Tibial artery (tissue), 4 donors: ENCODE measurements at regions of chr11 and their contacts with region 1.

Region 1: DNA sequence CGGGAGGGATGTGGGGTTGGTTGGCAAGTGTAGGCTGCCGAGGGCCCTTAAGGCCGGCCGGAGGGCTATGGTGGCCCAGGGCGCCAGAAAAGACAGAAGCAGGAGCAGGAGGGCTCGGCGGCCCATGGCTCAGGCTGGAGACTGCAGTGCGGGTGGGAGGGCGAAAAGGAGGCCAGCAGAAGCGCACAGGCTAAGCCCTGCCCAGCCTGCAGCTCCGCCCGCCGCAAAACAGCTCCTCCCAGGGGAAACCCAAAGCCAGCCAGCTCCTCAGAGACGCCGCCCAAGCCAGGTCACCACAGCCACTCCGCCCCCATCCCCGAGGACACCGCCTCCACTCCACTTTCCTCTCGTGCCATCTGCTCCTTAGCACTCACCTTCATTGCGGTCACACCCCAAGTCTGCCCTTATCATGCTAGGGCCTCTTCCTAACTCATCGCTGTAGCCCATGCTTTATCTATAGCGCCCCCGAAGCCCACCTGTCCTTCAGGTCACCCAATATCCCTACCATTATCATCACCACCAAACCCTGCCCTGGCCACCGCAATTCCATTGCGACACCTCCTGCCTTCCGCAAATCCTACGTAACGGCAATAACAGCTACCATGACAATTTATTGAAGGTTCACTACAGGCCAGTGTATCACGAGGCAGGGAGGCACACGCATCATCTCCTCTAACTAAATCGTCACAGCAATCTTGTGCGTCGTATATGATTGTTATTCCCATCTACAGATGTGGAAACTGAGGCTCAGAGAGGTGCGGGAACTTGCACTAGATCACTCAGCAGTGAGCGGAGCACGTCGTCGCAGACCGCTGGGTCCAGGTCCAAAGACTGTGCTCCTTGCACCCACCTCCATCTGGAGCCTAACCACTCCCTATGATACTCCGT is at the start of gene PRCP:
- DNase-seq: peak; percentile 95 to 98
- H3K4me3 ChIP-seq: peak within 1 kb of the TSS; percentile 73 to 76
- H3K27ac ChIP-seq: peak within 1 kb of the TSS; percentile 93 to 94
- H3K4me1 ChIP-seq: peaks cover 0 to 23% (median 16%) of the 10 kb centered on the region in 4 donors
- H3K27me3 ChIP-seq: no peaks in the 10 kb centered on the region
- CTCF ChIP-seq: peak in 1 of 2 experiments; percentile 11

Region 2: DNA sequence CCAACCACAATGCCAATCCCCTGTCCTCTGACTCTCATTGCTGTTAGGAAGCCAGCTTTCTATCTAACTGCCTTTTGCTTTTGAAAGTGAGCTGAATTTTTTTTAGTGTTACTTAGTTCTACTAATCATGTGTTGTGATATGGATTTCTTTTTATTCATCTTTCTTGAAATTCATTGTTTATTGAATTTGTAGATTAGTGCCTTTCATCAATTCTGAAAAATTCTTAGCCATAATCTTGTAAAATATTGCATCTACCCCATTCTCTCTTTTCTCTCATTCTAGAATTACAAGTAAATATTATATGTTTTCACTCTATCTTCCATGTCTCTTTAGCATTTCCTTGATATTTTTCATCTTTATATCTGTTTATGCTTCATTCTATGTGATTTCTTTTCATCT is 48.8 kb after region 1 on chr11:
- intact Hi-C with region 1: no loop called
- DNase-seq: no peak
- H3K4me3 ChIP-seq: no peak overlapping the region
- H3K27ac ChIP-seq: no peak overlapping the region
- H3K4me1 ChIP-seq: no peaks in the 10 kb centered on the region
- H3K27me3 ChIP-seq: no peaks in the 10 kb centered on the region
- CTCF ChIP-seq: no peak

Region 3: GRCh38 chr11:83063073-83063754 is 162.7 kb after region 1 on chr11:
- intact Hi-C with region 1: loop called (anchors 10 kb)
- DNase-seq: no peak
- H3K4me3 ChIP-seq: peak overlapping the region in 1 of 2 donors; percentile 25
- H3K27ac ChIP-seq: peak overlapping the region; percentile 13 to 19
- H3K4me1 ChIP-seq: peaks cover 0 to 23% (median 12%) of the 10 kb centered on the region in 4 donors
- H3K27me3 ChIP-seq: no peaks in the 10 kb centered on the region
- CTCF ChIP-seq: no peak

Region 4: DNA sequence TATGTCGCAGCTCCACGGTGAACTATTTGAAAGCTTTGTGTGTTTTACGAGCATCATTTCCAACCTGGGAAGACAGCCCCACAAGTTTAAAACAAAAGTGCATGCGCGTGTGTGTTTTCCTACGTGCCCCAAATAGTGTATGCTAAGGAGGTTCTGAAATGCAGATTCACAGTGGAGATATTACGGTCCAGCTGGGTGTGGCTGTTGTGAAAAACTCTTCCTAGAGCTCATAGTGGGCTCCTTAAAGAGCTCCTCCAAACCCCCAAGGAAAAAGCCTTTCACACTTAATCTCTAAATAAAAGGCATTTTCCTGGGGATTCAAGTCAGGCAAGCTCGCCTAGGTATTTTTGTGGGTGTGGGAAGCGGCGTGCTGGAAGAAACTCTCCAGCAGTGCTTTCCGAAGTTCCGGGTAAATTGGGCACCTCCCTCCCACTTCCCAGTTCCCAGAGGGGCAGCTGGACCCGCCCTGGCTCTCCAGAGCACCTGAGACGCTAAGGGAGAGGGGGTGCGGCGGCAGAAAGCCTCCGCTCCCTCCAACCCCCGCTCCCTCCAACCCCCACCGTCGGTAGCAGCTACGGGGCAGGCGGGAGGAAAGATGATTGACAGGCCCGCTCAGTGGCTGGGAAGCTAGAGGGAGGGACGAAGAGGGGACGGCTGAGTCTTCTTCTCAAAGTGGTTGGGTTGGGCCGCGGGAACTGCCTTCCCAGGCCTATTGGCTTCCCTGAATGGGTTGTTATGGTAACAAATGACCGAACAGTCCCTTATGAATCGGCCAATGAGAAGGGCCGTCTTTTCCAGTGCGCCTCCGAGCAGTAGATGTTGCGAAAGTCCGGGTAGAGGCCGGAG is 255.9 kb after region 1 on chr11:
- intact Hi-C with region 1: loop called (anchors 10 kb)
- DNase-seq: peak; percentile 99 to 100
- H3K4me3 ChIP-seq: peak overlapping the region; percentile 60 to 88
- H3K27ac ChIP-seq: peak overlapping the region; percentile 88 to 98
- H3K4me1 ChIP-seq: peaks cover 0 to 25% (median 8%) of the 10 kb centered on the region in 4 donors
- H3K27me3 ChIP-seq: no peaks in the 10 kb centered on the region
- CTCF ChIP-seq: no peak

Region 5: DNA sequence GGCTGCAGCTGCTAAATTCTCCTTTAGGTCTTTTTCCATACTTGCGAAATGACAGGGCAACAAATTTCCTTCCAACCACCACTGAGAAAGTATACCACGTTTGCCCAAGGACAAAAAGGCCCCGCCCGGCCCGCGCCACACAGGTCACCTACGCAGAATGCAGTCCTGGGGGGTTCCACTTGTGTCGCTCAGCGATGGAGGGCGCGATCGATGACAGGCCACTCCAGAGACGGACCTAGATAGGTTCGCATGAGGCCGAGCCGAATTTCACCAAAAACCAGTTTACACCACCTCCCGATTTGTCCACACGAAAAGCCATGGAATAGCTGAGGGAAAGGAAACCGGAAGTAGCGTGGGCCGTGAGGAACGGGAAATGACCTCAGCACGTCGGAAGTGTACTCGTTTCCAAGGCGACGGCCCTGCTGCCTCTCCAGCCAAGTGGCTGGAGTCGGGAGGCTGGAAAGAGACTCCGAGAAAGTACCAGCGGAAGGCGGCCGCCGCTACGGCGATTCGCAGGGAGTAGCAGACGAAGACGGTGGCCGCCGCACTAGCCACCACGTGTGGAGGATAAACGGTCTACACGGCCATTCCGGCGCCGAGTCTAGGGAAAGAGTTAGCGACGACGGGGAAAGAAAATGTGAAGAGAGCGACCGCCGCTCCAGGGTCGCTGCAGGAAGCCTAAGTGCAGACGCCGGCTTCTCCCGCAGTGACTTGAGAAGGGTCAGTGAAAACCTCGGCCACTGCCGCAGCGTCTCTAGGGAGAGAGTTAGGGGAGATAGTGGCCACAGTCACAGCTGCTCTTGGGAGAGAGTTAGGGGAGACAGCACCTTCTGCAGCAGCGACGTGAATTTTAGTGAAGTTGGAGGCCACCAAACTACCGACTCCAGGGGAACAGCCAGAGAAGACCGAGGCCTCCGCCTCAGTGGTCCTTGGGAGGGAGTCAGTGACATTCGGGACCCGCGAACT is 293.1 kb after region 1 on chr11 and contains the start of gene ANKRD42:
- intact Hi-C with region 1: loop called (anchors 10 kb)
- DNase-seq: peak; percentile 95 to 96
- H3K4me3 ChIP-seq: peak within 1 kb of the TSS; percentile 75 to 81
- H3K27ac ChIP-seq: peak within 1 kb of the TSS; percentile 83 to 89
- H3K4me1 ChIP-seq: peaks cover 0 to 46% (median 34%) of the 10 kb centered on the region in 4 donors
- H3K27me3 ChIP-seq: no peaks in the 10 kb centered on the region
- CTCF ChIP-seq: no peak

Region 6: DNA sequence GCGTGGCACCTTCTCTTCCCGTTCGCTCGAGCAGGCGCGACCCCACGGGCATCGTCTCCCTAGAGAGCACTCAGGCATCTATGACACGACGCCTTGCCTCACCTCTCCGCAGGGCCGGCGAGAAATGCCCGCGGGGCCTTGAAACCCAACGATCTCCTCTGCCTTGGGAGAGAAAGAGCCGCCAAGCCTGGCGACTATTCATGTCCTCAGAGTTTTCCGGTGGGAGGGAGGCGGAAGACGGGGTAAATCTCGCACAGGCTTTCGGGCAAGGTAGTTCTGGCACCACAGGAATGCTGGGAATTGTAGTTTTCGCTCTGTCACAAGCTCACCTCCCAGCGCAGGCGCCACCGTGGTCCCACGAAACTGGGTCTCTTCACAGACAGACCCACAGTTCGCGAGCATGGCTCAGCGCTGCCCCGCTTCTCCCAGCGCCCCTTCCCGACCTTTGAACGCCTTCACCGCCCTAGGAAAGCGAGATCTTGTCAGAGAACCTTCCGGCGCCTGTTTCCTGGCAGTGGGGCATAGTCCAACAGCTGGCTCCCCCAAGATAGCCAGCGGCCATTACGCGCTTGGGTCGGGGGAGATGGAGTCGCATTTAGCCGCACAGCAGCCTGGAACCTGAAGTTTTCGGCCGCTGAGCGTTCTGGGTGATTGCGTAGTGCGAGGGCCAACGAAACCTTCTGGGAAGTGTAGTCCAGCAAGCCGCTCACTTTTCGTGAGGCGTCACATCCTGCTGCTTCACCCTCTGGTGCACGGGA is 385.4 kb after region 1 on chr11 and contains the start of gene CCDC90B:
- intact Hi-C with region 1: loop called (anchors 10 kb)
- DNase-seq: peak; percentile 96 to 98
- H3K4me3 ChIP-seq: peak within 1 kb of the TSS; percentile 70 to 84
- H3K27ac ChIP-seq: peak within 1 kb of the TSS; percentile 96 to 97
- H3K4me1 ChIP-seq: peaks cover 0 to 39% (median 17%) of the 10 kb centered on the region in 4 donors
- H3K27me3 ChIP-seq: no peaks in the 10 kb centered on the region
- CTCF ChIP-seq: no peak